ENCODE measurements at regions of chr22 and their contacts with region 1.

Region 1: DNA sequence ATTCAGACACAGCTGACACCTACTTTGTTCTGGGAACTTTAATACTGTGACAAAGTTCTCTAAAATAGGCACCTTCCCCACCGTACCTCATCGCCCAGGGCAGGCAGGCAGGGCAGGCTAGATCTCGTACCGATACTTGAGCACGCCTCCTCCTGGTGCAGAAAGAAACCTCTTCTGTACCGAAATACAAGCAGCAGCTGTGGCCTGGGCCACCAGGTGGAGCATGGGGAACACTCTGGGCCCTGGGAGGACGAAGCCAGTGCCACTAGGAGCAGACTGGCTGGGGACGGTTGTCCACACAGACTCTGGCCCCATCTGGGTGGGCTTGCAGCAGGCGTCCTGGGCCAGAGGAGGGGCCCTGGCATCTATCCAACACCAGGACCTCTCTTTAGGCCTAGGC is 12.8 kb downstream of the PMM1 start:
- DNase-seq: peak; percentile 87
- ATAC-seq: peak; percentile 95
- H3K4me3 Mint-ChIP-seq: no peak overlapping the region
- H3K27ac Mint-ChIP-seq: peak overlapping the region; percentile 80
- H3K4me1 Mint-ChIP-seq: no peaks in the 10 kb centered on the region
- H3K27me3 Mint-ChIP-seq: no peaks in the 10 kb centered on the region
- CTCF ChIP-seq: peak; percentile 44; the same call in 1 of the 2 replicates

Region 2: DNA sequence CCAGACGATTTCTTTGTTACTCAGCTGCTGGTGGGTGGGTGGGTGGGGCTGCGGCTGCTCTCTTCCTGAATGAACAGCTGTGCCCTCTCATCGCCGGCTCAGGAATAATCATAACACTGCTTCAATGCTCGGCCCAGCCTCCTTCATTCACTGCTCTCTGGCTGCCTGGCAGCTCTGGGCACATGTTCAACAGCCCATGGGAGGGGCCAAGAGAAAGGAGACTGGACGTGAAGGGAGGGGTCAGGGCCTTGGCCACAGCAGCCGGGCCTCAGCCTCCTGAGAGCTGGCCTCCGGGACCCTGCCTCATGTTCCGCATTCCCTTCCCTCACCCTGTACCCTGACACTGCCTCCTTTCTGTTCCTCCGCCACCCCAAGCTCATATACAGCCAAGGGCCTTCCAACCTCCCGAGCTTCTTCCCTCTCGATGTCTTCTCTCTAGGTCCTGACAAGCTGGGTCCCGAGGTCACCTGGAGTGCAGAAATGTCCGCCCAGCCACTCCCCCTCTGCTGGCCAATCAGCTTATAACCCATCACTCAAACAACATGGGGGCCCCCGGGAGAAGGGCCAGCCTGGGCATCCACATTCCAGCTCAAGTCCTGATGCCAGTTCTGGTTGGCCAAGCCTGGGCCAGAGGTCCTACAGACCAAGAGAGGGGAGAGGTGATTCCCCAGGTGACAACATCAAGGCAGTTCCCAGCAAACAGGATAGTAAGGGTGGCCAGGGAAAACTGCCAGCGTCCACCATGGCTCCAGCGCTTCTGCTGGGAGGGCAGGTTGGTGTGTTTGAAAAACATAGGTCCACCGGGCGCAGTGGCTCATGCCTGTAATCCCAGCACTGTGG is 19.3 kb before region 1 on chr22:
- CTCF ChIA-PET with region 1: interaction called, 23 read pairs
- POLR2A ChIA-PET with region 1: interaction called, 6 read pairs
- DNase-seq: peak; percentile 39
- ATAC-seq: peak; percentile 16; the same call in 1 of the 2 replicates
- H3K4me3 Mint-ChIP-seq: no peak overlapping the region
- H3K27ac Mint-ChIP-seq: no peak overlapping the region; the same call in 1 of the 2 replicates
- H3K4me1 Mint-ChIP-seq: peaks cover 37% of the 10 kb centered on the region
- H3K27me3 Mint-ChIP-seq: no peaks in the 10 kb centered on the region
- CTCF ChIP-seq: no peak

Region 3: DNA sequence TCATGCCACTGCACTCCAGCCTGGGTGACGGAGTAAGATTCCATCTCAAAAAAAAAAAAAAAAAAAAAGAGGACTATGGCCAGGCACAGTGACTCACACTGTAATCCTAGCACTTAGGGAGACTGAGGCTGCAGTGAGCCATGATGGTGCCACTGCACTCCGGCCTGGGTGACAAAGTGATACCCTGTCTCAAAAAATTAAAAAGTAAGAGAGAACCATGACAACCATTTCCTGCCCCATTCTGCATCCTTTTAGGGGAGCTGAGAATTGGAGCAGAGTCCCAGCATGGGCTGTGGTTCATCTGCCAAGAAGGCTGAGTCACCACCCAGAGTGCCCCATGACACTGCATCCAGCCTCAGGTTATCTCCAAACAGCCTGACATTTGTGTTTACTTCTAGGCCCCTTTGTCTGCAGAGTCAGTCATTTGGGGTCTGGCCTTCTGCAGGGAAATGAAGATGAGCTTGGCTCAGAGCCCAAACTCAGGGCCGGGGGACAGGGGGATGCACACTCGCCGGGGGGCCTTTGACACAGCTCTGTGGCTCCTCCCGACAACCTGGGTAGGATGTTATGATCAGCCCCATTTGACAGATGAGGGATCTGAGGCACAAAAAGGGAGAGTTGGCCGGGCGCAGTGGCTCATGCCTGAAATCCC is 11.3 kb before region 1 on chr22:
- CTCF ChIA-PET with region 1: interaction called, 28 read pairs
- POLR2A ChIA-PET with region 1: no interaction called
- DNase-seq: no peak
- ATAC-seq: peak; percentile 10; the same call in 1 of the 2 replicates
- H3K4me3 Mint-ChIP-seq: no peak overlapping the region
- H3K27ac Mint-ChIP-seq: no peak overlapping the region
- H3K4me1 Mint-ChIP-seq: peaks cover 27% of the 10 kb centered on the region
- H3K27me3 Mint-ChIP-seq: peaks cover 5% of the 10 kb centered on the region; the same call in 1 of the 2 replicates
- CTCF ChIP-seq: no peak

Region 4: DNA sequence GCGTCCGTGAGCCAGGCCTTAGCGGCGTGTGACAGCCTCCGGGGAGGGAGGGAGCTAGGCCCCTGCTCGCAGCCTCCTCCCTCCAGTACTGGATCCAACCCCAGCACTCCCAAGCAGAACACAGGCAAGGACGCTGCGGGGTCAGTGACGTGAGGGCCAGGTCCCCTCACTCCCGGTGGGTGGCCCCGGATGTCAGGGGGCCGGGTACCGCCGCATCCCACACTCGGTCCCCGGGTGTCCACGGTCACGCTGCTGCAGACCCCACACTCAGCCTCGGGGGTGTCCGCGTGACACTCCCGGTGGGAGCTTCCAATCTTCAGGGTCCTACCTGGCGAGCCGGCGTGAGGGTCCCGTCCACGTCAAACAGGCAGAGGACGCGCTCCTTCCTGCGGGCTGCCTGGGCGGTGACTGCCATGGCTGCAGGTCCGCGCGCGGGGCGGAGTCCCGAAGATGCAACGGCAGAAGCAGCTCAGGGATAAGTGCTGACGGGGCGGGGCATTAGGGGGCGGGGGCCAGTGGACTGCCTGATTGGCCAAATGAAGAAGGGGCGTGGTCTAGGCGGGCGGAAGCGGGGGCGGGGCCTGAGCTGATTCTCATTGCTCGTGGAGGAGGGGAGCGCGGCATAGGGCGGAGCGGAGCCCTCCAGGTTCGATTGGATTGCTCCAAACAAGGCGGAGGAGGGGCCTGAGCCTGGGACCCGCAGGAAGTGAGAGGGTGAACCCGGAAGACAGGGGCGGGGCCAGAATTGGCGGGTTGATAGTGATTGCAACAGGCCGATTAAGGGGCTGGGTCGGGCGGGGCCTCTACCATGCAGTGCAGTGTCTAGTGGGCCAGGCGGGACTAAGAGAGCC is 12.7 kb after region 1 on chr22 and contains the start of gene PMM1:
- CTCF ChIA-PET with region 1: interaction called, 53 read pairs
- POLR2A ChIA-PET with region 1: interaction called, 6 read pairs
- DNase-seq: peak; percentile 100
- ATAC-seq: peak; percentile 99
- H3K4me3 Mint-ChIP-seq: peak within 1 kb of the TSS; percentile 89
- H3K27ac Mint-ChIP-seq: peak within 1 kb of the TSS; percentile 76
- H3K4me1 Mint-ChIP-seq: peaks cover 6% of the 10 kb centered on the region
- H3K27me3 Mint-ChIP-seq: peaks cover 10% of the 10 kb centered on the region; the same call in 1 of the 2 replicates
- CTCF ChIP-seq: no peak
- total RNA-seq, gene PMM1: 14.8 to 15.7 TPM (median 15.0 TPM) in 3 replicates

Region 5: GRCh38 chr22:41596776-41597634 is 20.1 kb after region 1 on chr22:
- CTCF ChIA-PET with region 1: interaction called, 53 read pairs
- POLR2A ChIA-PET with region 1: interaction called, 3 read pairs
- DNase-seq: peak; percentile 79
- ATAC-seq: peak; percentile 95
- H3K4me3 Mint-ChIP-seq: no peak overlapping the region
- H3K27ac Mint-ChIP-seq: no peak overlapping the region
- H3K4me1 Mint-ChIP-seq: no peaks in the 10 kb centered on the region
- H3K27me3 Mint-ChIP-seq: peaks cover 16% of the 10 kb centered on the region; the same call in 1 of the 2 replicates
- CTCF ChIP-seq: peak; percentile 84

Region 6: GRCh38 chr22:41621099-41621910 is 44.4 kb after region 1 on chr22 and contains the start of gene XRCC6:
- CTCF ChIA-PET with region 1: interaction called, 13 read pairs
- POLR2A ChIA-PET with region 1: no interaction called
- DNase-seq: peak; percentile 100
- ATAC-seq: peak; percentile 92
- H3K4me3 Mint-ChIP-seq: peak within 1 kb of the TSS; percentile 94
- H3K27ac Mint-ChIP-seq: peak within 1 kb of the TSS; percentile 99
- H3K4me1 Mint-ChIP-seq: peaks cover 20% of the 10 kb centered on the region
- H3K27me3 Mint-ChIP-seq: no peaks in the 10 kb centered on the region; the same call in 1 of the 2 replicates
- CTCF ChIP-seq: no peak
- total RNA-seq, gene XRCC6: 410 to 474 TPM (median 420 TPM) in 3 replicates

Measured in WTC11 (cell line).